HCT116 (cell line): ENCODE measurements at regions of chr16 and their contacts with region 1.

Region 1: GRCh38 chr16:57300387-57301125 is 16.1 kb upstream of the PLLP start:
- DNase-seq: peak; percentile 97
- ATAC-seq: peak; percentile 80
- H3K4me3 ChIP-seq: no peak overlapping the region
- H3K27ac ChIP-seq: no peak overlapping the region
- H3K4me1 ChIP-seq: peaks cover 9 to 40% of the 10 kb centered on the region in 2 experiments
- H3K27me3 ChIP-seq: no peaks in the 10 kb centered on the region
- CTCF ChIP-seq: peak; percentile 93 to 97 (median 96)
- POLR2A ChIP-seq: no peak
- RAD21 ChIP-seq: peak; percentile 100

Region 2: GRCh38 chr16:56373003-56373402 is 927.6 kb before region 1 on chr16:
- CTCF ChIA-PET with region 1: no interaction called
- POLR2A ChIA-PET with region 1: no interaction called
- RAD21 ChIA-PET with region 1: no interaction called
- intact Hi-C with region 1: no loop called
- DNase-seq: no peak
- ATAC-seq: no peak
- H3K4me3 ChIP-seq: no peak overlapping the region
- H3K27ac ChIP-seq: no peak overlapping the region
- H3K4me1 ChIP-seq: peaks cover 0 to 14% of the 10 kb centered on the region in 2 experiments; a peak in 1 of 4 replicates
- H3K27me3 ChIP-seq: no peaks in the 10 kb centered on the region
- CTCF ChIP-seq: no peak
- POLR2A ChIP-seq: no peak
- RAD21 ChIP-seq: no peak

Region 3: DNA sequence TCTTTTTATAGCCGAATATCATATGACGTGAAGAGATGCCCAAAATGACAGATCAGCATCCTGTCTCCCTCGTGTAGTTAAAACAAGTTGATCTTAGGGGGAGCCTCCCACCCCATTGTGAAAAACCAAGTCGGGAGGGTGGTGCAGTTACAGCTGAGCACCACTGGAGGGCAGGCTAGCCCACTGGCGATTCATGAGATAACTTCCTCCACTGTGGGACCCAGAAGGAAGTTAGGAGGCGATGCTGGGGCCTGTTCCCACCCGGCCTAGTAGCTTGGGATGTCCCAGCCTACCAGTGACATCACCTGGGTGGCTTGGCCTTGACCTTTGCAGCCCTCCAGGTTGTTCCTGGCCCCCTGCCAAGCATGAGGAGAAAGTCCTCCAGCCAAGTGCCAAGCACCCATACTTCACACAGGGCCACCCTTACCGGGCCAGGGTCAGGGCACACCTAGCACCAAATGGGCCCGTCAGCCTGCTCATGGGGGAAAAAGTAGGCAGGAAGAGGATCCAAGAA is 216.2 kb before region 1 on chr16:
- CTCF ChIA-PET with region 1: no interaction called
- POLR2A ChIA-PET with region 1: no interaction called
- RAD21 ChIA-PET with region 1: no interaction called
- intact Hi-C with region 1: loop called (anchors 5 kb)
- DNase-seq: peak; percentile 63
- ATAC-seq: peak; percentile 90
- H3K4me3 ChIP-seq: no peak overlapping the region
- H3K27ac ChIP-seq: no peak overlapping the region
- H3K4me1 ChIP-seq: no peaks in the 10 kb centered on the region
- H3K27me3 ChIP-seq: no peaks in the 10 kb centered on the region
- CTCF ChIP-seq: peak; percentile 89 to 98 (median 98)
- POLR2A ChIP-seq: no peak
- RAD21 ChIP-seq: peak; percentile 92

Region 4: GRCh38 chr16:57185944-57186871 is 114.3 kb before region 1 on chr16 and contains the starts of genes PSME3IP1 and RSPRY1:
- CTCF ChIA-PET with region 1: no interaction called
- POLR2A ChIA-PET with region 1: no interaction called
- RAD21 ChIA-PET with region 1: interaction called in 1 of 2 experiments, 3 read pairs
- intact Hi-C with region 1: loop called (anchors 10 kb)
- DNase-seq: peak; percentile 99
- ATAC-seq: peak; percentile 94
- H3K4me3 ChIP-seq: peak within 1 kb of the TSS; percentile 96
- H3K27ac ChIP-seq: peak within 1 kb of the TSS; percentile 85
- H3K4me1 ChIP-seq: peaks cover 12 to 21% of the 10 kb centered on the region in 2 experiments
- H3K27me3 ChIP-seq: no peaks in the 10 kb centered on the region
- CTCF ChIP-seq: no peak
- POLR2A ChIP-seq: no peak
- RAD21 ChIP-seq: no peak
- total RNA-seq, gene PSME3IP1: 88.5 TPM
- total RNA-seq, gene RSPRY1: 24.9 TPM

Region 5: GRCh38 chr16:57244767-57245471 is 55.6 kb before region 1 on chr16 and contains the start of gene ARL2BP:
- CTCF ChIA-PET with region 1: no interaction called
- POLR2A ChIA-PET with region 1: interaction called, 5 read pairs
- RAD21 ChIA-PET with region 1: no interaction called
- intact Hi-C with region 1: loop called (anchors 2 kb)
- DNase-seq: peak; percentile 94
- ATAC-seq: peak; percentile 97
- H3K4me3 ChIP-seq: peak within 1 kb of the TSS; percentile 67 to 82
- H3K27ac ChIP-seq: peak within 1 kb of the TSS; percentile 80
- H3K4me1 ChIP-seq: peaks cover 10 to 15% of the 10 kb centered on the region in 2 experiments
- H3K27me3 ChIP-seq: no peaks in the 10 kb centered on the region
- CTCF ChIP-seq: peak in 1 of 3 experiments; percentile 26; a peak in 1 of 6 replicates
- POLR2A ChIP-seq: peak; percentile 72
- RAD21 ChIP-seq: no peak
- total RNA-seq, gene ARL2BP: 28.8 TPM

Region 6: DNA sequence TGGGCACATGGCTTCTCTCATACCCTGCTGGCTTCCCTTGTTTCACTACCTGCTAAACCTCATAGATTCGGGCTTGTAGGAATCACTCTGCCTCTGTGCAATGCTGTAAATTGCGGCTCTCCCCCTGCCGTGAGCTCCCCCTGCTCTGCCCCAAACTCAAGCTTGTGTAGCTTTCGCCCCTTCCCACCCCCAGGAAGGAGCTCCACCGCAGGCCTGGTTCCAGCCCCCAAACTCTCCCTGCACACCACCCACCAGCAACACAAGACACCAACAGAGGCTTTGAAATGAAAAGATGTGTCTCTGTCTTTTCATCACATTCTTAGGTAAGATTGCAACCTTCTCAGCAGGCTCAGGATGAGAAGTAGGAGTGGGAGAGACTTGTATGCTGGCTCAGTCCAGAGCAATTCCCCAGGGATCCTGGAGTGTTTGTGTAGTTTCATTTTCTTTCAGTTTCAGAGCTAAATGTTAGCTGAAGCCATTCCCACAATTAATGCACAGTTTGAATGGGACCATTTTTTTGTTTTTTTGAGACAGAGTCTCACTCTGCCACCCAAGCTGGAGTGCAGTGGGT is 85.9 kb after region 1 on chr16:
- CTCF ChIA-PET with region 1: no interaction called
- POLR2A ChIA-PET with region 1: no interaction called
- RAD21 ChIA-PET with region 1: no interaction called
- intact Hi-C with region 1: no loop called
- DNase-seq: no peak
- ATAC-seq: no peak
- H3K4me3 ChIP-seq: no peak overlapping the region
- H3K27ac ChIP-seq: no peak overlapping the region
- H3K4me1 ChIP-seq: peaks cover 0 to 17% of the 10 kb centered on the region in 2 experiments; a peak in 2 of 4 replicates
- H3K27me3 ChIP-seq: 0 out of 2 replicates have a peak, but pooled peaks cover 3% of the 10 kb centered on the region
- CTCF ChIP-seq: no peak
- POLR2A ChIP-seq: no peak
- RAD21 ChIP-seq: no peak

Region 7: GRCh38 chr16:57416122-57416509 is 115.6 kb after region 1 on chr16:
- CTCF ChIA-PET with region 1: interaction called, 126 read pairs
- POLR2A ChIA-PET with region 1: interaction called, 17 read pairs
- RAD21 ChIA-PET with region 1: interaction called, 5 to 6 read pairs
- intact Hi-C with region 1: loop called (anchors 1 kb)
- DNase-seq: no peak
- ATAC-seq: no peak
- H3K4me3 ChIP-seq: no peak overlapping the region
- H3K27ac ChIP-seq: no peak overlapping the region; the same call in 1 of the 2 replicates
- H3K4me1 ChIP-seq: peaks cover 16 to 32% of the 10 kb centered on the region in 2 experiments; a peak in 3 of 4 replicates
- H3K27me3 ChIP-seq: no peaks in the 10 kb centered on the region
- CTCF ChIP-seq: no peak
- POLR2A ChIP-seq: no peak
- RAD21 ChIP-seq: no peak

Region 8: GRCh38 chr16:57422026-57422944 is 121.7 kb after region 1 on chr16:
- CTCF ChIA-PET with region 1: interaction called, 126 read pairs
- POLR2A ChIA-PET with region 1: interaction called, 17 read pairs
- RAD21 ChIA-PET with region 1: interaction called, 5 to 6 read pairs
- intact Hi-C with region 1: loop called (anchors 1 kb)
- DNase-seq: no peak
- ATAC-seq: peak; percentile 48
- H3K4me3 ChIP-seq: no peak overlapping the region
- H3K27ac ChIP-seq: no peak overlapping the region
- H3K4me1 ChIP-seq: peaks cover 15 to 23% of the 10 kb centered on the region in 2 experiments; a peak in 3 of 4 replicates
- H3K27me3 ChIP-seq: no peaks in the 10 kb centered on the region
- CTCF ChIP-seq: peak; percentile 65 to 75 (median 74)
- POLR2A ChIP-seq: no peak
- RAD21 ChIP-seq: peak; percentile 82

Region 9: GRCh38 chr16:57470683-57471082 is 170.1 kb after region 1 on chr16:
- CTCF ChIA-PET with region 1: no interaction called
- POLR2A ChIA-PET with region 1: no interaction called
- RAD21 ChIA-PET with region 1: no interaction called
- intact Hi-C with region 1: no loop called
- DNase-seq: no peak
- ATAC-seq: no peak
- H3K4me3 ChIP-seq: no peak overlapping the region
- H3K27ac ChIP-seq: no peak overlapping the region
- H3K4me1 ChIP-seq: peaks cover 0 to 2% of the 10 kb centered on the region in 2 experiments; a peak in 2 of 4 replicates
- H3K27me3 ChIP-seq: no peaks in the 10 kb centered on the region
- CTCF ChIP-seq: no peak
- POLR2A ChIP-seq: no peak
- RAD21 ChIP-seq: no peak

Region 10: GRCh38 chr16:57519796-57520360 is 219.3 kb after region 1 on chr16:
- CTCF ChIA-PET with region 1: interaction called, 4 read pairs
- POLR2A ChIA-PET with region 1: no interaction called
- RAD21 ChIA-PET with region 1: no interaction called
- intact Hi-C with region 1: loop called (anchors 1 kb)
- DNase-seq: peak; percentile 41
- ATAC-seq: peak; percentile 98
- H3K4me3 ChIP-seq: no peak overlapping the region
- H3K27ac ChIP-seq: no peak overlapping the region
- H3K4me1 ChIP-seq: no peaks in the 10 kb centered on the region
- H3K27me3 ChIP-seq: no peaks in the 10 kb centered on the region
- CTCF ChIP-seq: peak; percentile 95 to 99 (median 98)
- POLR2A ChIP-seq: no peak
- RAD21 ChIP-seq: peak; percentile 95

Region 11: DNA sequence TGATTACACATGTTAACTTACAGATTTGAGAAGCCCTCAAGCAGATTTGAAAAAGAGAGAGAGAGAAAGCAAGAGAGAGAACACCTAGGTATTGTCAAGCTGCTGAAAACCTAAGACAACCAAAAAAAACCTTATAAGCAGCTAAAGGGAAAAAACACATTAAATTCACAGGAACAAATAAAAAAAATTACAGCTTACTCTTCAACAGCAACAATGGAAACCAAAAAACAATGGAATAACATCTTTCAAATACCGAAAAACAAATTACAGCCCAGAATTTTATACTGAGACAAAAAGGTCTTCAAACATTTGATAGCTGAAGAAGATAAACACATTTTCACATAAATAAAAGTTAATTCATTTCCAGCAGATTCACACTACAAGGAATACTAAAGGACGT is 837.0 kb after region 1 on chr16:
- CTCF ChIA-PET with region 1: no interaction called
- POLR2A ChIA-PET with region 1: no interaction called
- RAD21 ChIA-PET with region 1: no interaction called
- intact Hi-C with region 1: no loop called
- DNase-seq: no peak
- ATAC-seq: no peak
- H3K4me3 ChIP-seq: no peak overlapping the region
- H3K27ac ChIP-seq: no peak overlapping the region
- H3K4me1 ChIP-seq: no peaks in the 10 kb centered on the region
- H3K27me3 ChIP-seq: no peaks in the 10 kb centered on the region
- CTCF ChIP-seq: no peak
- POLR2A ChIP-seq: no peak
- RAD21 ChIP-seq: no peak